WTC11 (cell line): ENCODE measurements at regions of chr1 and their contacts with region 1.

Region 1: DNA sequence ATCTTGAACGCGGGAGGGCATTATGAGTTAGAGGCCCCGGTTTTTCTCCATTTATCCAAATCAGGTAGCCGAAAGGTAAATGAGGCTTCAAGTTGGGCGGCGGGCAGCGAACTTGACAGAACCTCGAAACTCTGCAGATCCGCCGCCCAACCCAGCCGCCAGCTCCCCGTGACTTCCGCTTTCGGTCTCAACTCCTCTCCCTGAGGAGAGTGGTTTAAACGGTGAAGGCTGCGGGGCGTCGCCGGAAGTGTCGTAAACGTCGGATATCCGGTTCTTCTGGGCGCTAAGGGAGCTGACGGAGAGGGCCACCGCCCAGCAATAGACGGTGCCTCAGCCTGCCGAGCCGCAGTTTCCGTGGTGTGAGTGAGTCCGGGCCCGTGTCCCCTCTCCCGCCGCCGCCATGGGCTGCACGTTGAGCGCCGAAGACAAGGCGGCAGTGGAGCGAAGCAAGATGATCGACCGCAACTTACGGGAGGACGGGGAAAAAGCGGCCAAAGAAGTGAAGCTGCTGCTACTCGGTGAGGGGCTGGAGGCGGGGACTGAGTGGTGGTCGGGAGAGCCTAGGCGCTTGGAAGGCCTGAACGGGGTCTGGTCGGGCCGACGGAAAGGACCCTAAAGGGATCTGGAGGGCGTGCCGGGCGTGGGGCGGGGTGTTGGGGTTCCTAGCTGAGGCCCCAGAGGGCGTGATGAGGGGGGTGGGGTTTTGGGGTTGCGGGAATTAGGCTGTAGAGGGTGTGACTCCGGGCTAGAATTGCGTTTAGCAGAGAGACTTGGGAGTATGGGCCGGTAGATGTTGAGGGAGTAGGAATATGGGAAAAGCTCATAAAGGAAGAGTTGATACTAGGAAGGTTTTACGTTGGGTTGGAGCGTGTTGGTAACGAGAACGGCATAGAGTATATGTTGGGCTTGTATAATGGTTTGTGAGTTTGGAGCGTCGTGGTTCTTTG is at the start of gene GNAI3:
- DNase-seq: peak; percentile 94
- ATAC-seq: peak; percentile 88
- H3K4me3 Mint-ChIP-seq: peak within 1 kb of the TSS; percentile 85
- H3K27ac Mint-ChIP-seq: peak within 1 kb of the TSS; percentile 94
- H3K4me1 Mint-ChIP-seq: peaks cover 25% of the 10 kb centered on the region
- H3K27me3 Mint-ChIP-seq: no peaks in the 10 kb centered on the region; the same call in 1 of the 2 replicates
- CTCF ChIP-seq: no peak
- total RNA-seq, gene GNAI3: 7.1 to 7.2 TPM (median 7.1 TPM) in 3 replicates

Region 2: DNA sequence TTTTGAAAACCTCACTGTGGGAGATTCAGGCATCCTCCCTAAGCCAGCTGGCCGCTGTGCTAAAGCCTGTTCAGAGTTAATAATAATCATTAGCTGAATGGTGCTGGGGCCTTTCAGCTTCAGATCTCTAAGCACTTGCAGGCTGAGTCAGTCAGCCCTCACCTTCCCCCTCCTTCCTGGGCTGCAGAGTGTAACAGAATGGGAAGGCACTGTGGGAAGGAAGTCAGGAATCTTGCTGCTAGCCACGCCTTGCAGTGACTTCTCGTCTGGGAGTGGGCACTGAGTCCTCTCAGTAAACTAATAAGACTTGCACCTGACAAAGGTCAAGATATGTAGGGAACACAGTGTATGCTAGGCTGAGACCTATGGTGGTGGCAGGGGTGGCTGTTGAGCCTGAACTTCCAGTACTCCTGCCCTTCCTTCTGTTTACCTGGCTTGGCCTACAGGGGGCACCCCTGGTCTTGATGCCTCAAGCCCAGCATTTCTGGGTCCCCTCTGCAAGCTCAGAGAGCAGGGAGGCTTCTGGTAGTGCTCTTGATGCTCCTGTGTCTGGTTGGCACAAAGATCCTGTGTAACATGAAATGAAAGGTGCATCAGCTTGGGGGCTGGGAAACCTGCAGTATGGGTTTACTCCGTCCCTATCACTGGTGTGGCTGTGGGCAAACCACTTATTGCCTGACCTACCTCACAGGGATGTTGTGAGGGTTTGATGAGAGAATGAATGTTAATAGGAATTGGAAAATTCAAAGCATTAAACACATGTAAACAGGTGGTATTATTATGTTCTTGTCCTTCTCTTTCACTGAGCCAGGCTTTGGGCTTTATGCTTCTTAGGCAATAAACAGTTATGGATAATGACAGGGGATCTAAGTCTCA is 48.7 kb before region 1 on chr1:
- CTCF ChIA-PET with region 1: interaction called, 14 read pairs
- POLR2A ChIA-PET with region 1: no interaction called
- DNase-seq: peak; percentile 89
- ATAC-seq: peak; percentile 77
- H3K4me3 Mint-ChIP-seq: no peak overlapping the region
- H3K27ac Mint-ChIP-seq: 0 out of 2 replicates have a peak overlapping the region, but pooled peaks have one; percentile 23
- H3K4me1 Mint-ChIP-seq: peaks cover 28% of the 10 kb centered on the region
- H3K27me3 Mint-ChIP-seq: no peaks in the 10 kb centered on the region
- CTCF ChIP-seq: peak; percentile 40; the same call in 1 of the 2 replicates

Region 3: DNA sequence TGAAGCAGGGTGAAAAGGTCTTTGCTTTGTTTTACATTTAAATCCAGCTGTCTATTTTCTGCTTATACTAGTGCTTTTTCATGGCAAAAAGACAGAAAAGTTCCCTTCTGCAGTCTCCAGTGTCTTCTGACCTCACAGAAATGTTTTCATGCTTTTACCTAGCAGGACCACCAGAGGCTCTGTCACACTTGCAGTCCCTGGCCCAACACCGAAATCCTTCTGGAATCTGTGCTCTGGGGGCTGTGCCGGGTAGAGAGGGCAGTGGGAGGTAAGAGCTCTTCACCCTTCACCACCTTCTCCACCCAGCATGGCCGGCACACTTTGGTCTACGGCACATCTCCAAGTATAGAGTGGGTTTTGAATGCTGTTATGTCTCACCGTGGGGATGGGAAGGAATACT is 50.1 kb after region 1 on chr1:
- CTCF ChIA-PET with region 1: interaction called, 13 read pairs
- POLR2A ChIA-PET with region 1: interaction called, 4 read pairs
- DNase-seq: peak; percentile 58
- ATAC-seq: peak; percentile 98
- H3K4me3 Mint-ChIP-seq: no peak overlapping the region
- H3K27ac Mint-ChIP-seq: peak overlapping the region; percentile 61; the same call in 1 of the 2 replicates
- H3K4me1 Mint-ChIP-seq: 0 out of 2 replicates have a peak, but pooled peaks cover 3% of the 10 kb centered on the region
- H3K27me3 Mint-ChIP-seq: no peaks in the 10 kb centered on the region
- CTCF ChIP-seq: no peak

Region 4: GRCh38 chr1:109620841-109621286 is 72.3 kb after region 1 on chr1:
- CTCF ChIA-PET with region 1: interaction called, 18 read pairs
- POLR2A ChIA-PET with region 1: interaction called, 13 read pairs
- DNase-seq: peak; percentile 90
- ATAC-seq: peak; percentile 65
- H3K4me3 Mint-ChIP-seq: peak overlapping the region; percentile 97
- H3K27ac Mint-ChIP-seq: peak overlapping the region; percentile 92; the same call in 1 of the 2 replicates
- H3K4me1 Mint-ChIP-seq: peaks cover 47% of the 10 kb centered on the region
- H3K27me3 Mint-ChIP-seq: no peaks in the 10 kb centered on the region
- CTCF ChIP-seq: no peak

Region 5: GRCh38 chr1:109649491-109649914 is 100.9 kb after region 1 on chr1:
- CTCF ChIA-PET with region 1: interaction called, 10 read pairs
- POLR2A ChIA-PET with region 1: interaction called, 3 read pairs
- DNase-seq: no peak
- ATAC-seq: no peak
- H3K4me3 Mint-ChIP-seq: no peak overlapping the region
- H3K27ac Mint-ChIP-seq: no peak overlapping the region
- H3K4me1 Mint-ChIP-seq: no peaks in the 10 kb centered on the region; the same call in 1 of the 2 replicates
- H3K27me3 Mint-ChIP-seq: peaks cover 26% of the 10 kb centered on the region
- CTCF ChIP-seq: no peak